CD8-positive, alpha-beta T cell (primary cell): ENCODE measurements at regions of chr6 and their contacts with region 1.

Region 1: DNA sequence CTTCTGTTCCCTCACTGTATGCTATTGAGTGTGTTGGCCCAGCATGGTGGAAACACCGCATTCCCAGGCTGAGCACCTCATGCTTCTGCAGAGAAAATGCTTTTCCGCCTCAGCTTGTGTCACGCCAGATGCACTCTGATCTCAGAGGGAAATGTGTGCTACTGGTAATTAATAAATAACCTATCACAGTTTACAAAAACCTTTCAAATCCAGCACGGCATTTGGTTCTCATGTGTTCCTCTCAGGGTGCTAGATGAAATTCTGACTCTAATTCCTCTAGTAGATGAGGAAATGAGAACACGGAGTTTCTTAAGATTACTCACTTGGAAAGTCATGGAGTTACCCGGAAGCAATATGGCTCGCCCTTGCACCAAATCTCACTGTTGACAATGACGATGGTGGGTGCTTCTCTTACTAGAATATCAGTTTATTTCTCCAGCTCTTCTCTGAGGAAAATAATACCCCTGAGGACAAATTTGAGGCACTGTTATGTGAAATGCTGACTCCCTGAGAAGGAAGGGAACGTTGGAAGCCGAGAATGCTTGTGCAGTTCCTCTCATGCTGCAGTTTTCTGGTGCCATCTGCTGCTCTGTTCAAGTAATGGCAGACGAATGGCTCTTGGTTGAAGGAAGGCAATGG is 116.6 kb downstream of the RNF144B start:
- DNase-seq: peak in 6 of 9 experiments; percentile 7 to 62 (median 27)
- ATAC-seq: no peak
- H3K4me3 ChIP-seq: no peak overlapping the region
- H3K4me3 Mint-ChIP-seq: no peak overlapping the region
- H3K27ac ChIP-seq: no peak overlapping the region
- H3K27ac Mint-ChIP-seq: no peak overlapping the region
- H3K4me1 ChIP-seq: no peaks in the 10 kb centered on the region
- H3K4me1 Mint-ChIP-seq: peaks cover 2% of the 10 kb centered on the region
- H3K27me3 ChIP-seq: no peaks in the 10 kb centered on the region
- H3K27me3 Mint-ChIP-seq: no peaks in the 10 kb centered on the region
- CTCF ChIP-seq: peak; percentile 82

Region 2: DNA sequence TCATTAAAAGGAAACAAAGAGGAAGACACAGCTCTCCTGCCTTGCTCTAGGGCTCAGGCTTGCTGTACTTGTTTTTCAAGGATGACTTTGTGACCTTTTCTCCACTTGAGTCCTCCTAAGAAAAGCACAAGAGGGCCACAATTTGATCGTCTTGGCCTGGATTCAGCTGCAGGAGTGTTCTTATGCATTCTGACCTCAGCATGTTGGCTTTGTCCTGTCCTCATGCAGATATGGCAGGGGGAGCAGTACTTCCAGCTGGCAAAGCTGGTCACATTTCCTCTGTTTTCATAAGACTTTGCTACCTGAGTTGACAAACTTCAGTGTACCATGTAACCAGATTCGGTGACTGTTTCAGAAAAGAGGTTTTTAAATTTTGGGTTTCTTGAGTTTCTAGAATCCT is 317.7 kb before region 1 on chr6:
- CTCF ChIA-PET with region 1: no interaction called
- POLR2A ChIA-PET with region 1: no interaction called
- intact Hi-C with region 1: loop called in 1 of 2 experiments (anchors 10 kb)
- DNase-seq: no peak
- ATAC-seq: no peak
- H3K4me3 ChIP-seq: no peak overlapping the region
- H3K4me3 Mint-ChIP-seq: no peak overlapping the region
- H3K27ac ChIP-seq: no peak overlapping the region
- H3K27ac Mint-ChIP-seq: no peak overlapping the region
- H3K4me1 ChIP-seq: no peaks in the 10 kb centered on the region
- H3K4me1 Mint-ChIP-seq: no peaks in the 10 kb centered on the region
- H3K27me3 ChIP-seq: no peaks in the 10 kb centered on the region
- H3K27me3 Mint-ChIP-seq: no peaks in the 10 kb centered on the region
- CTCF ChIP-seq: no peak

Region 3: DNA sequence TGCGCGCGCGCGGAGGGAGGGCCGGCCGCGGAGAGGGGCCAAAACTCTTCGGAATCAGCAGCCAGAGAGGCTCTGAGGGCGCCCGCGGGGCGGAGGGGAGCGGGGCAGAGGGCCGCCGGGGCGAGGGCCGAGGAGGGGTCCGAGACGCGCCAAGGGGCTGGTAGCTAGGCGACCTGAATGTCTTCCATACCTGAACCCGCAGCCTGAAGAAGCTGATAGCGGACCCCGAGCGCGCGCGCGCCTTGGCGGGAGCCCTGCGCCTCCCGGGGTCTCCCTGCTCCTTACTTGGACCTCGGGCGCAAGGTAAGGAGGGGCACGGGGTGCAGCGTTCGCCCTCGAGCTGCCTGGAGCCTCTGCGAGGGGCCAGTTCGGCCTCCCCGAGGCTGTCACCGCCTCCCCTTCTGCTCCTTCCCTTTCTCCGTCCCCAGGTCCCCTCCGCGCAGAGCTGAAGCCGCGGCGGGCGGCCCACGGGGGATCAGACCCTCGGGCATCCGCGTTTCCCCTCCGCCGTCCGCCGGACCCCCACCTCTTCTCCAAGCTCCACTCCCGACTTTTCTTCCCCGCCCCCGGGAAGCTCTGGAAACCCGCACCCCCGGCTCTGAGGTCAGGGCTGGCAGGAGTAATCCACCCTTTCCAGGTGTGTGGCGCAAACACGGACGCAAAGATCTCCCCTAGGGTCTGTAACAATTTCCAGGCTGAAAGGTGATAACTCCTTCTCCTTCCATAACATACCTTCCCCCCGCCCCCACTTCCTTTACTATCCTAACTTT is 226.3 kb before region 1 on chr6:
- CTCF ChIA-PET with region 1: no interaction called
- POLR2A ChIA-PET with region 1: no interaction called
- intact Hi-C with region 1: no loop called
- DNase-seq: no peak
- ATAC-seq: no peak
- H3K4me3 ChIP-seq: no peak overlapping the region
- H3K4me3 Mint-ChIP-seq: no peak overlapping the region
- H3K27ac ChIP-seq: no peak overlapping the region
- H3K27ac Mint-ChIP-seq: no peak overlapping the region
- H3K4me1 ChIP-seq: no peaks in the 10 kb centered on the region
- H3K4me1 Mint-ChIP-seq: peaks cover 7% of the 10 kb centered on the region
- H3K27me3 ChIP-seq: peaks cover 5 to 22% of the 10 kb centered on the region in 2 experiments
- H3K27me3 Mint-ChIP-seq: peaks cover 49% of the 10 kb centered on the region
- CTCF ChIP-seq: no peak

Region 4: DNA sequence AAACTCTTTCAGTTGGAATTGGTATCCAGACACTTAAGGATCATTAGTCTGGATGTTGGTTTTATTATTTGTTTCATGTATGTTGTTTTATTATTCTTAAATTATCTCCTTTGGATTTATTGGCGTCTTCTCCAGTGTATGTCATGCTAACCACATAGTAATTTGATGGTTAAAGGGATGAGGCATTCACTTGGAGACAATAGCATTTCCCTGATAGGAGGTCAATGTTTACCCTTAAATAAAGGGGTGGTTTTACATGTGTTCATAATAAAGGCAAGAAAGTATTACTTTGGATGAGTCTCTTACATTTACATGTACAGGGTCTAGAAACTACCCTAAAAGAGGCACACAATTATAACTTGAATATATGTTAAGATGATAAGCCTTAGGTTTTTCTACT is 167.8 kb before region 1 on chr6:
- CTCF ChIA-PET with region 1: interaction called, 193 read pairs
- POLR2A ChIA-PET with region 1: no interaction called
- intact Hi-C with region 1: no loop called
- DNase-seq: no peak
- ATAC-seq: no peak
- H3K4me3 ChIP-seq: no peak overlapping the region
- H3K4me3 Mint-ChIP-seq: no peak overlapping the region
- H3K27ac ChIP-seq: no peak overlapping the region
- H3K27ac Mint-ChIP-seq: no peak overlapping the region
- H3K4me1 ChIP-seq: no peaks in the 10 kb centered on the region
- H3K4me1 Mint-ChIP-seq: no peaks in the 10 kb centered on the region
- H3K27me3 ChIP-seq: no peaks in the 10 kb centered on the region
- H3K27me3 Mint-ChIP-seq: no peaks in the 10 kb centered on the region
- CTCF ChIP-seq: no peak

Region 5: DNA sequence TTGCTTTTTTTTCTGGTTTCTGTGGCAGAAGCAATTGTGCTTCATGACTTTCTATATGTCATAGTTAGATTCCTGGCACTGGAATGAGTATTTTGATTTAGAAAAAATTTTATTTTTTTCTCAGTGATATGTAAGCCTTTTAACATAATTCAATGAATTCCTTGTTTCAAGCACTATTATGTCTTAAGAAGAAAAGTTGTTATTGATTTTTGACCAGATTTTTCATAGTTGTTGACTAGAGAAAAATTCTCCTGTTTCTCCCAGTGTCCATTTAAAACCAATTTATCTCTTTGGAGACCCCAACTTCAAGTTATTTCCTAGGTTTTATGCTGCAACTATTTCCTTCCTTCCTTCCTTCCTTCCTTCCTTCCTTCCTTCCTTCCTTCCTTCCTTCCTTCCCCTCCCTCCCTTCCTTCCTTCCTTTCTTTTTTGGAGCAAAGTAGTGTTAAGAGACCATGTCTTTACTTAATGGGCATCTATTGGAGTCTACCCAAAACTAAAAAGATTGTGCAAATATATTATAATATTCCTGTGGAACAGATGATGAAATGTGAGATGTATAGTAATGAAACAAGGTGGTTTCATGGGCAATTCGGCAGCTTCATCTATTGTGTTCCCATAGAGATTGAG is 230.3 kb after region 1 on chr6:
- CTCF ChIA-PET with region 1: no interaction called
- POLR2A ChIA-PET with region 1: no interaction called
- intact Hi-C with region 1: no loop called
- DNase-seq: no peak
- ATAC-seq: no peak
- H3K4me3 ChIP-seq: no peak overlapping the region
- H3K4me3 Mint-ChIP-seq: no peak overlapping the region
- H3K27ac ChIP-seq: no peak overlapping the region
- H3K27ac Mint-ChIP-seq: no peak overlapping the region
- H3K4me1 ChIP-seq: no peaks in the 10 kb centered on the region
- H3K4me1 Mint-ChIP-seq: no peaks in the 10 kb centered on the region
- H3K27me3 ChIP-seq: no peaks in the 10 kb centered on the region
- H3K27me3 Mint-ChIP-seq: no peaks in the 10 kb centered on the region
- CTCF ChIP-seq: no peak